ENCODE measurements at regions of chr19 and their contacts with region 1.

Region 1: GRCh38 chr19:44845612-44846454 is at the start of gene NECTIN2:
- DNase-seq: peak; percentile 47 to 95 (median 69)
- ATAC-seq: peak; percentile 85
- H3K4me3 ChIP-seq: peak within 1 kb of the TSS; percentile 57
- H3K4me3 Mint-ChIP-seq: peak within 1 kb of the TSS; percentile 82 to 98 (median 89)
- H3K27ac ChIP-seq: peak within 1 kb of the TSS; percentile 58
- H3K27ac Mint-ChIP-seq: peak within 1 kb of the TSS in 8 of 9 donors; percentile 61 to 92 (median 79)
- H3K4me1 ChIP-seq: peaks cover 18 to 19% of the 10 kb centered on the region in 2 donors
- H3K4me1 Mint-ChIP-seq: peaks cover 18 to 38% (median 29%) of the 10 kb centered on the region in 7 donors
- H3K27me3 ChIP-seq: peaks cover 0 to 5% of the 10 kb centered on the region in 2 donors
- H3K27me3 Mint-ChIP-seq: peaks cover 0 to 46% (median 9%) of the 10 kb centered on the region in 5 donors
- total RNA-seq, gene NECTIN2: 0.17 to 9.2 (median 1.2) TPM

Region 2: DNA sequence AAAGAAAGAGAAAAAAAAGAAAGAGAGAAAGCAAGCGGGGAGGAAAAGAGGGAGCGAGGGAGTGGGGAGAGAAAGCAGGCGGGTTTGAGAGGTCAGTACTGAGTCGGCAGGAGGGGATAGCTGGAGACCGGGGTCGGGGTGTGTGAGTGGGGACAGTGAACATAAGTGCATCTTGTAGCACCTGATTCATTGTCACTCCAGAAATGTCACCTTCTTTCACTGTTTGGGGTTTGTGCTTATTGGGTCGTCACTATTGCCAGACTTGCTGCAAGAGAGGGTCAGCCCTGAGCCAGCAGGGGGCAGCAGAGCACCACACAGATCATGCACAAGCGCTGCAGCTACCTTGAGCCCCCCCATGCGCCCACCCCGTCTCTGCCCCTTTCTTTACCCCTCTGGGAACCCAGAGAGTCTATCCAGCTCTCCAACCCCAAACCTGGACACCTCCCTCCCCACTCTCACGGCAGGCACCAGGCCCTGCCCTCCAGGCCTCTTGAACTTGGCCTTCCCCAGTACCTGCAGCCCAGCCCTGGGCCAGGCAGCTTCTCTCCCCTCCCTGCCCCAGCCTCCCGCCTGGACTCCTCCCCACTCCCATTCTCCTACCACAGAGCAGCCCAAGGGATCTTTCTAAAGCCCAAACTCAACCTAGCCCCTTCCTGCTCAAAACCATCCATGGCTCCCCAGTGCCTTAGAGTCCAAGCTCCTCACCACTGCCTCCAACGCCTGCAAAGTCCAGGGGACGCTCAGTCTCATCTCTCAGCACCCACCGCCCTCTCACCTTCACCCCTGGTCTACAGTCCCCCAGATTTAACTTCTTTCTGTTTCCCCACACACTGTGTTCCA is 156.6 kb before region 1 on chr19:
- CTCF ChIA-PET with region 1: interaction called, 5 read pairs
- POLR2A ChIA-PET with region 1: no interaction called
- intact Hi-C with region 1: loop called (anchors 1 kb)
- DNase-seq: peak; percentile 42 to 79 (median 69)
- ATAC-seq: peak; percentile 63
- H3K4me3 ChIP-seq: no peak overlapping the region
- H3K4me3 Mint-ChIP-seq: peak overlapping the region in 1 of 10 donors; percentile 20
- H3K27ac ChIP-seq: no peak overlapping the region
- H3K27ac Mint-ChIP-seq: peak overlapping the region in 4 of 9 donors; percentile 45 to 74 (median 62)
- H3K4me1 ChIP-seq: peaks cover 0 to 21% of the 10 kb centered on the region in 2 donors
- H3K4me1 Mint-ChIP-seq: peaks cover 25 to 43% (median 32%) of the 10 kb centered on the region in 7 donors
- H3K27me3 ChIP-seq: no peaks in the 10 kb centered on the region
- H3K27me3 Mint-ChIP-seq: peaks cover 5 to 19% (median 9%) of the 10 kb centered on the region in 5 donors

Region 3: GRCh38 chr19:44746946-44747738 is 98.7 kb before region 1 on chr19:
- CTCF ChIA-PET with region 1: no interaction called
- POLR2A ChIA-PET with region 1: no interaction called
- intact Hi-C with region 1: loop called in 1 of 2 experiments (anchors 1 kb)
- DNase-seq: peak; percentile 51 to 97 (median 61)
- ATAC-seq: peak; percentile 83
- H3K4me3 ChIP-seq: peak overlapping the region; percentile 91
- H3K4me3 Mint-ChIP-seq: peak overlapping the region; percentile 90 to 99 (median 92)
- H3K27ac ChIP-seq: peak overlapping the region; percentile 97
- H3K27ac Mint-ChIP-seq: peak overlapping the region; percentile 87 to 99 (median 94)
- H3K4me1 ChIP-seq: peaks cover 23 to 33% of the 10 kb centered on the region in 2 donors
- H3K4me1 Mint-ChIP-seq: peaks cover 35 to 56% (median 55%) of the 10 kb centered on the region in 7 donors
- H3K27me3 ChIP-seq: no peaks in the 10 kb centered on the region
- H3K27me3 Mint-ChIP-seq: peaks cover 0 to 3% (median 0%) of the 10 kb centered on the region in 5 donors

Region 4: GRCh38 chr19:44782729-44783128 is 63.1 kb before region 1 on chr19:
- CTCF ChIA-PET with region 1: interaction called, 5 read pairs
- POLR2A ChIA-PET with region 1: no interaction called
- intact Hi-C with region 1: loop called (anchors 1 kb)
- DNase-seq: no peak
- ATAC-seq: no peak
- H3K4me3 ChIP-seq: no peak overlapping the region
- H3K4me3 Mint-ChIP-seq: no peak overlapping the region
- H3K27ac ChIP-seq: no peak overlapping the region
- H3K27ac Mint-ChIP-seq: no peak overlapping the region
- H3K4me1 ChIP-seq: no peaks in the 10 kb centered on the region
- H3K4me1 Mint-ChIP-seq: peaks cover 0 to 7% (median 6%) of the 10 kb centered on the region in 7 donors
- H3K27me3 ChIP-seq: no peaks in the 10 kb centered on the region
- H3K27me3 Mint-ChIP-seq: peaks cover 0 to 4% (median 0%) of the 10 kb centered on the region in 5 donors

Region 5: GRCh38 chr19:44890366-44891015 is 44.7 kb after region 1 on chr19:
- CTCF ChIA-PET with region 1: no interaction called
- POLR2A ChIA-PET with region 1: no interaction called
- intact Hi-C with region 1: loop called (anchors 1 to 2 kb)
- DNase-seq: peak; percentile 97 to 100 (median 100)
- ATAC-seq: peak; percentile 86
- H3K4me3 ChIP-seq: peak overlapping the region; percentile 69
- H3K4me3 Mint-ChIP-seq: peak overlapping the region; percentile 83 to 93 (median 89)
- H3K27ac ChIP-seq: peak overlapping the region; percentile 84
- H3K27ac Mint-ChIP-seq: peak overlapping the region; percentile 90 to 96 (median 94)
- H3K4me1 ChIP-seq: peaks cover 10 to 20% of the 10 kb centered on the region in 2 donors
- H3K4me1 Mint-ChIP-seq: peaks cover 18 to 44% (median 35%) of the 10 kb centered on the region in 7 donors
- H3K27me3 ChIP-seq: no peaks in the 10 kb centered on the region
- H3K27me3 Mint-ChIP-seq: no peaks in the 10 kb centered on the region

Region 6: DNA sequence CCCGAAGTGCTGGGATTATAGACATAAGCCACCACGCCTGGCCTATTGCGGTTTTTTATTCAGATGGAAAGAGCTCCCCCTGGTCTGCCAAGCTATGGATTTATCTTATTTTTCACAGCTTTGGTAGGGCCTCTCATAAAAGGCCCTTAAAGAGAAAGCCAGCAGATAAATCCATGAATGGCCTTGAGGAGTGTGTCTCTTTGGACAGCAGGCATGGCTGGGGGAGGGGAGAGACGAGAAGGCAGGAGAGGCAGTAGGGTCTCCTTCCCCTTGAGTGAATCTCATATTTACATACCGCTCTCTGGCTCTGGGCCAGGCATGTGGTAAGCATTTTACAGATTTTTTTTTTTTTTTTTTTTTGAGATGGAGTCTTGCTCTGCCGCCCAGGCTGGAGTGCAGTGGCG is 430.5 kb after region 1 on chr19:
- CTCF ChIA-PET with region 1: no interaction called
- POLR2A ChIA-PET with region 1: no interaction called
- intact Hi-C with region 1: no loop called
- DNase-seq: no peak
- ATAC-seq: no peak
- H3K4me3 ChIP-seq: no peak overlapping the region
- H3K4me3 Mint-ChIP-seq: no peak overlapping the region
- H3K27ac ChIP-seq: no peak overlapping the region
- H3K27ac Mint-ChIP-seq: no peak overlapping the region
- H3K4me1 ChIP-seq: no peaks in the 10 kb centered on the region
- H3K4me1 Mint-ChIP-seq: no peaks in the 10 kb centered on the region
- H3K27me3 ChIP-seq: no peaks in the 10 kb centered on the region
- H3K27me3 Mint-ChIP-seq: no peaks in the 10 kb centered on the region

Measured in naive thymus-derived CD4-positive, alpha-beta T cell (primary cell).